AG04449 (cell line): ENCODE measurements at regions of chr2 and their contacts with region 1.

Region 1: GRCh38 chr2:171416009-171416926 is 17.5 kb downstream of the METTL8 start:
- DNase-seq: peak; percentile 84
- H3K4me3 ChIP-seq: no peak overlapping the region
- CTCF ChIP-seq: peak; percentile 94

Region 2: GRCh38 chr2:170928824-170929685 is 487.2 kb before region 1 on chr2 and contains the start of gene GORASP2:
- CTCF ChIA-PET with region 1: interaction called, 20 read pairs
- POLR2A ChIA-PET with region 1: no interaction called
- DNase-seq: peak; percentile 98
- H3K4me3 ChIP-seq: peak within 1 kb of the TSS; percentile 90
- CTCF ChIP-seq: peak; percentile 81

Region 3: GRCh38 chr2:170966648-170967436 is 449.4 kb before region 1 on chr2:
- CTCF ChIA-PET with region 1: interaction called, 79 read pairs
- POLR2A ChIA-PET with region 1: no interaction called
- DNase-seq: no peak
- H3K4me3 ChIP-seq: no peak overlapping the region
- CTCF ChIP-seq: peak; percentile 18

Region 4: DNA sequence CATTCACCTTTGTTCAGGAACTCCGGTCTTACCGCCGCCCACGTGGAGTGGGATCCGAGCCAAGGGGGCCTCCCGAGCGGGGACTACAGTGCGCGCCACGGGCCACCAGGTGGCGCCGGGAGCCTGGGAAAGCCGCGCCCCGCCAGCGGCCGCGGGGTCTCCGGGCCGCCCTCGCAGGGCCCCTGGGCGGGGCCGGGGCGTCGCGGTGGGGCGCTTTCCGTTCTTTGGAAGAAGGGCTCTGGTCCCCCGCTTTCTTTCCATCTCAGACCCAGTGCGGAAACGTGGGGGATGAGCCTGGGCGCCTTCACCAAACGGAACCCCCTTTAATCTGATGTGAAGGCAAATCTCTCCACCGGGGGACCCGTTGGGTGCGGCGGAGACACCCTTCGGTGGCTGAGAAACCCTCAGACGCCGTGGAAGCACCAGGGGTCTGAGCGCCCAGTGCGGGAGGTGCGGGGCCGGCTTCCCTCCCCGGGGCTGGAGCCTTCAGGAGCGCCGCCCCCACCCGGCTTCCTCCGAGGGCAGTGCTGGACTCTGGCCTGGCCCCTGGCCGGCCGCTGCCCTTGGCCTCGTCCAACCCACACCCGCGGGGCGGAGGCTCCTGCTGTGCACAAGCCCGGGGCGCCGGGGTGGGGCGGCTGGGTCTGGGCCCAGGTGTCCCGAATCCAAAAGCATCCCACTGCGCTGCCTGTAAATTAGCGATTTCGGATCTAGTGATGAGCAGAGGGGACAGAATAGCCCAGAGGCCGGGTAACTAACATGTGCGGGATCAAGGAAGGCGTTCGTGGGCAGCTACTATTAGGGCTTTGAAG is 442.6 kb before region 1 on chr2:
- CTCF ChIA-PET with region 1: interaction called, 79 read pairs
- POLR2A ChIA-PET with region 1: interaction called, 3 read pairs
- DNase-seq: no peak
- H3K4me3 ChIP-seq: peak overlapping the region; percentile 76
- CTCF ChIP-seq: peak; percentile 83

Region 5: DNA sequence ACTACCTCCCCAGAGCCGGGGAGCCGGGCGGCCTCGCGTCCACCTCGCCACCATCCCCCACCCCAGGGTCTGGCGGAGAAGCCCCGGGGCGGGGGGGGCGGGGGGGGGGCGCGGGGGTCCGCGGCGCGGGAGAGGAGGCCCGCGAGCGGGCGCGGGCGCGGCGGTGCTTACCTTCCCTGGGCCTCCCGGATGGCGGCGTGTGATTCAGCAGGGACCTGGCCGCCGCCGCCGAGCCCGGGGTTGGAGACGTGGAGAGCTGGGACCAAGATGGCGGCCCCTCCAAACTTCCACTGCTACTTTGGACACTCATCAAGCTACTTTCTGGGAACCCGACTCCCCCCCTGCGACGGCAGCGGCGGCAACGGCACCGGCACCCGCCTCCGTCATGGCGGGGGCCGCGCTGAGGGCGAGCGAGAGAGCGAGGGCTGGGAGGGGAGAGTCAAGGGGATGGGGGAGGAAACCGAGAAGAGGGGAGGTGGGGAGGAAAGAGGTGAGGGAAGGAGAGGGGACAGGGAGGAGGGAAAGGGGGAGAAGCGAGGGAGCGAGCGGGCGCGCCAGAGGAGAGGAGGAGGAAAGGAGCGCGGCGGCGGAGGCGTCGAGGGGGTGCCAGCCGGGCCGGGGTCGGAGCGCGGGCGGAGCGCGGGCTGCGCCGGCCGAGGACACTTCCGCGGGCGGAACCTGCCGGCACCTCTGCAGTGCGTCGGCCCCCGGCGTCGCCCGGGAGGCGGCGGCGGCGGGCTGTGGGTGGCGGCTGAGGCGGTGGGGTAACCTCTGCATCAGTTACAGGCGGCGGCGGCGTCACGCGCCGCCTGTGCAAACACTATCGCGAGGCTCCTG is 255.9 kb before region 1 on chr2 and contains the start of gene TLK1:
- CTCF ChIA-PET with region 1: interaction called, 33 read pairs
- POLR2A ChIA-PET with region 1: interaction called, 5 read pairs
- DNase-seq: no peak
- H3K4me3 ChIP-seq: peak within 1 kb of the TSS; percentile 91
- CTCF ChIP-seq: no peak

Region 6: DNA sequence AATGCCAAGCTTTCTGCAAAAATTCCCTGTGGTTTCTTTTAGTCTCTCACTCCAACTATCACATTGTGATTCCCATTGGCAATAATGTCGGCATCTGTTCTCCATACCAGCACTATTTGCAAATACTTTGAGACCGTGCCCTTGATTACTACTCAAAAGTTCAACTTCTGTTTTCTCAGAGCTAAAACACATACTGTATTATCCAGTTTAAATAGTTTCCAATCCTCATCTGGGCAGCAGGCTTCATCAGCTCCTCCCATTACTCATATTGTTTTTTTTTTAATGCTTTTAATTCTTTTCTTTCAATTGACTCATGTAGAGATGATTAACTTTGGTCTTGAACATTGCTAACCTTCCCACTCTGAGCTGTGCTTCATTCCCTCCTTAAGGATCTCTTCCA is 118.3 kb before region 1 on chr2:
- CTCF ChIA-PET with region 1: interaction called, 13 read pairs
- POLR2A ChIA-PET with region 1: no interaction called
- DNase-seq: peak; percentile 74
- H3K4me3 ChIP-seq: peak overlapping the region; percentile 19
- CTCF ChIP-seq: no peak

Region 7: GRCh38 chr2:171433763-171434670 is 17.7 kb after region 1 on chr2 and contains the starts of genes DCAF17 and METTL8:
- CTCF ChIA-PET with region 1: interaction called, 19 read pairs
- POLR2A ChIA-PET with region 1: interaction called, 3 read pairs
- DNase-seq: peak; percentile 59
- H3K4me3 ChIP-seq: peak within 1 kb of the TSS; percentile 84
- CTCF ChIP-seq: peak; percentile 42